ENCODE measurements at regions of chr19 and their contacts with region 1.

Region 1: GRCh38 chr19:771332-771785 is 20.4 kb downstream of the MISP start:
- DNase-seq: peak in 1 of 2 donors; percentile 57
- ATAC-seq: peak in 6 of 8 donors; percentile 31 to 68 (median 60)
- H3K4me3 ChIP-seq: no peak overlapping the region
- H3K27ac ChIP-seq: no peak overlapping the region
- H3K4me1 ChIP-seq: peaks cover 0 to 12% (median 7%) of the 10 kb centered on the region in 9 donors
- H3K27me3 ChIP-seq: no peaks in the 10 kb centered on the region
- CTCF ChIP-seq: peak; percentile 39 to 67 (median 60)

Region 2: DNA sequence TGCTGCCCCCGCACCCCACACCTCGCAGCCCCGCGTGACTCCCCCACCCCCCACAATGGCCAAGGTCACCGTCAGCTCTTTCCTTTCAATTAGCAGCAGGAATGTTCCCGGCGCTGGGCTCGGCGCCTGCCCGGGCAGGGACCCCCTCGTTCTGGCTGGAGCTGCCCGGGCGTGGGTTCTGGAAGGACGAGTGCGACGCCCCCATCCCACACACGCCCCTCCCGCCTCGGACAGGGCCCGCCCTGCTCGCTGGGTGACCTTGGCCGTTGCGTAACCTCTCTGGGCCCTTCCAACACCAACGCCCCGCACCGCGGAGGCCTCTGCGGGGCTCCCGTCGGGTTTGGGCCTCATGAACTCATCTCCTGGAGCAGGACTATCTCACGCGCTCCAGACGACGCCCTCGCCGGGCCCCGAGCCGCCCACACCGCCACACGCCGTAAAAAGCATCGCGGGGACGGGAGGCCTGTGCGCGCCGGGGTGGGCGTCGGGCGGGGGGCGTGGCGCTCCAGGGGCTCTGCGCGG is 52.3 kb before region 1 on chr19:
- intact Hi-C with region 1: no loop called
- DNase-seq: peak in 1 of 2 donors; percentile 66
- ATAC-seq: peak in 7 of 8 donors; percentile 45 to 75 (median 58)
- H3K4me3 ChIP-seq: peak overlapping the region in 3 of 10 donors; percentile 3 to 9 (median 7)
- H3K27ac ChIP-seq: peak overlapping the region in 8 of 10 donors; percentile 36 to 76 (median 62)
- H3K4me1 ChIP-seq: peaks cover 8 to 40% (median 22%) of the 10 kb centered on the region in 9 donors
- H3K27me3 ChIP-seq: peaks cover 0 to 34% (median 14%) of the 10 kb centered on the region in 7 donors
- CTCF ChIP-seq: no peak

Region 3: DNA sequence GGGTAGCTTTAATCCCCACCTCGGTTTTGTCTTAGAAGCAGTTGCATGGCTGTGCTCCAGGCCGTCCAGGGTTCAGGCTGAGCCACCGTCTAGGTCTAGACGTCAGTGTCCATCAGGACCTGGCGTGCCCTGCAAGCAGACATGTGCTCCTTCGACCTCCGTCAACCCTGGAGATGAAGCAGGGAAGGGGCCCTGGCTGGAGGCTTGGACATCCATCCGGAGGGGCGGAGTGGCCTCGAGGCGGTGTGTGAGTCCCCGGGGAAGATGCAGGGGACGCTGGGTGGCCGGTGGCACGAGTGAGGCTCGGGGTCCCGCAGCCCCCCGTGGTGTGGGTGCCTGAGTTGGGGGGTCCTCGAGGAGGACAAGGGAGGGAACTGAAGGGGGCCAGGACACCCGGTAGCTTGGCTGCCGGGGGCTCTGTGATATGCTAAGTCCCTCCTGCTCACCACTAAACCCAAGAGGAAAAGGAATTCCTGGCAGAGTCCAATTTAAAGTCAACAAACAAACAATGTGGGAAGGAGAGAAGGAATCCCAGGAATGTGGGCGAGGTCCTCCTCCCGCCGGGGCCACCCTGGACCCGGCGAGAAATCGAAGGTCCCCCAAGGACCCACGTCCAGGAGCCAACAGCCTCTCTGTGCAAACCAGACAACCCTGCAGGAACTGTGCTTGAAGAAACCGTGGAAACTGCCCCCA is 11.0 kb after region 1 on chr19:
- intact Hi-C with region 1: no loop called
- DNase-seq: no peak
- ATAC-seq: peak; percentile 41 to 76 (median 54)
- H3K4me3 ChIP-seq: peak overlapping the region; percentile 4 to 50 (median 34)
- H3K27ac ChIP-seq: peak overlapping the region; percentile 36 to 92 (median 78)
- H3K4me1 ChIP-seq: peaks cover 5 to 62% (median 22%) of the 10 kb centered on the region in 9 donors
- H3K27me3 ChIP-seq: peaks cover 0 to 4% (median 0%) of the 10 kb centered on the region in 7 donors
- CTCF ChIP-seq: no peak

Region 4: GRCh38 chr19:850221-850978 is 79.0 kb after region 1 on chr19:
- intact Hi-C with region 1: loop called in 3 of 10 experiments (anchors 5 to 10 kb)
- DNase-seq: peak; percentile 90 to 92
- ATAC-seq: peak; percentile 85 to 93 (median 90)
- H3K4me3 ChIP-seq: peak overlapping the region in 6 of 10 donors; percentile 0 to 21 (median 8)
- H3K27ac ChIP-seq: peak overlapping the region; percentile 60 to 84 (median 79)
- H3K4me1 ChIP-seq: peaks cover 7 to 34% (median 13%) of the 10 kb centered on the region in 9 donors
- H3K27me3 ChIP-seq: peaks cover 0 to 59% (median 52%) of the 10 kb centered on the region in 7 donors
- CTCF ChIP-seq: no peak

Region 5: DNA sequence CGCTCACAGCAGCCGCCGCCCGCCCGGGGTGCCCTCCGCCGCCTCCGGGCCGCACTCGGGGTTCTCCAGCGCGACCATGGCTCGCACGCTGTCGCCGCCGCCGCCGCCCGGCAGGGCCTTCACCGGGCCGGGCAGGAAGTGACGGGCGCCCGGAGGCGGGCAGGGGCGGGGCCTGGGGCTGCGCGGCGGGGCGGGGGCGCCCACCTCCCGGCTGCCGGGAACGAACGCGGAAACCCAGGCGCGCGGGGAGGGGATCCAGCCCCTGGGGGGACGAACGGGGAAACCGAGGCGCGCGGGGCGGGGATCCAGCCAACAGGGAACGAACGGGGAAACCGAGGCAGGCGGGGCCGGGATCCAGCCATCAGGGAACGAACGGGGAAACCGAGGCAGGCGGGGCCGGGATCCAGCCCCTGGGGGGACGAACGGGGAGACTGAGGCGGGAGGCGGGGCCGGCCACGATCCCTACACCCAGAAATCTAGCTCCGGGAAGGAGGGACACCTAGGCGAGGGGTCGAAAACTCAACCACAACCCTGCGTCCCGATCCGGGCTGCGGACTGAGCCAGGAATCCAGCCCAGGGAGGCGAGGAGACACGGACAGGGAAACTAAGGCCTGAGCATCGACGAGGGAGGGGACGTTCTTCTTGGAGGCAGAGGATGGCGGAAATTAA is 141.9 kb after region 1 on chr19 and contains the start of gene R3HDM4:
- intact Hi-C with region 1: loop called in 2 of 10 experiments (anchors 5 kb)
- DNase-seq: peak; percentile 82 to 85
- ATAC-seq: peak; percentile 88 to 95 (median 92)
- H3K4me3 ChIP-seq: peak within 1 kb of the TSS; percentile 70 to 99 (median 88)
- H3K27ac ChIP-seq: peak within 1 kb of the TSS; percentile 70 to 99 (median 92)
- H3K4me1 ChIP-seq: peaks cover 13 to 59% (median 22%) of the 10 kb centered on the region in 9 donors
- H3K27me3 ChIP-seq: peaks cover 11 to 24% (median 22%) of the 10 kb centered on the region in 7 donors
- CTCF ChIP-seq: no peak
- total RNA-seq, gene R3HDM4: 16.3 to 30.6 (median 19.9) TPM

Region 6: GRCh38 chr19:925526-926322 is 154.4 kb after region 1 on chr19 and contains the start of gene ARID3A:
- intact Hi-C with region 1: loop called in 7 of 10 experiments (anchors 1 to 2 kb)
- DNase-seq: peak; percentile 77 to 81
- ATAC-seq: peak; percentile 76 to 84 (median 80)
- H3K4me3 ChIP-seq: peak within 1 kb of the TSS; percentile 51 to 99 (median 84)
- H3K27ac ChIP-seq: peak within 1 kb of the TSS in 9 of 10 donors; percentile 54 to 98 (median 85)
- H3K4me1 ChIP-seq: peaks cover 7 to 52% (median 20%) of the 10 kb centered on the region in 9 donors
- H3K27me3 ChIP-seq: peaks cover 4 to 9% (median 8%) of the 10 kb centered on the region in 7 donors
- CTCF ChIP-seq: no peak
- total RNA-seq, gene ARID3A: 3.0 to 11.7 (median 5.3) TPM

Region 7: DNA sequence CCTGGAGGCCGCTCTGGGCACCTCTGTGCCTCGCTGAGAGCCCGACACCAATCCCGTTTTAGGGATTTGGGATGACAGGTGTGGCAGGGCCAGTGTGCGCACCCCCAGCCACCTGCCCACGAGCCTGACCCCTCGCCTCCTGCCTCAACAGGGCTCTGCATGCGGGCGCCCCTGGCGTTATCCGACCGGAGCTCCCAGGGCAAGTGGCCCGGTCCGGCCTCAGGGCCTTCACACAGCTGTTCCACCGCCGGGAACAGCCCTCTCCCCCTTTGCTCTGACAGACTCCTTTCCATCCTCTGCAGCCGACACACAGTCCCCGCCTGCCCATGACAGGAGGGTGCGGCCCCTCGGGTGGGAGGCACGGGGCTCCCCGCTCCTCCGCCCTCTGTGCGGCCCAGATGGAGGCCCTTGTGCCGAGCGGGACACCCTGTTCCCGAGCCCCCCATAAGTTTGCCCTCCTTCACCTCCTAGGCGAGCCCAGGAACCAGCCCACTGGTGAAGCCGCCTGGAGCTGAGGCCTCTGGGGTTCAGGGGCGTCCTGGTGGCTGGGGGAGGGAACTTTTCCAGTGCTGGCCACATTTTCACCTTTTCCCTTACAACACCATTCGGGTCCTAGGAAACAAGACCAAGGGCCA is 205.8 kb after region 1 on chr19:
- intact Hi-C with region 1: loop called (anchors 5 to 10 kb)
- DNase-seq: no peak
- ATAC-seq: no peak
- H3K4me3 ChIP-seq: no peak overlapping the region
- H3K27ac ChIP-seq: no peak overlapping the region
- H3K4me1 ChIP-seq: peaks cover 0 to 9% (median 0%) of the 10 kb centered on the region in 9 donors
- H3K27me3 ChIP-seq: no peaks in the 10 kb centered on the region
- CTCF ChIP-seq: no peak